ENCODE measurements at regions of chr6 and their contacts with region 1.

Region 1: DNA sequence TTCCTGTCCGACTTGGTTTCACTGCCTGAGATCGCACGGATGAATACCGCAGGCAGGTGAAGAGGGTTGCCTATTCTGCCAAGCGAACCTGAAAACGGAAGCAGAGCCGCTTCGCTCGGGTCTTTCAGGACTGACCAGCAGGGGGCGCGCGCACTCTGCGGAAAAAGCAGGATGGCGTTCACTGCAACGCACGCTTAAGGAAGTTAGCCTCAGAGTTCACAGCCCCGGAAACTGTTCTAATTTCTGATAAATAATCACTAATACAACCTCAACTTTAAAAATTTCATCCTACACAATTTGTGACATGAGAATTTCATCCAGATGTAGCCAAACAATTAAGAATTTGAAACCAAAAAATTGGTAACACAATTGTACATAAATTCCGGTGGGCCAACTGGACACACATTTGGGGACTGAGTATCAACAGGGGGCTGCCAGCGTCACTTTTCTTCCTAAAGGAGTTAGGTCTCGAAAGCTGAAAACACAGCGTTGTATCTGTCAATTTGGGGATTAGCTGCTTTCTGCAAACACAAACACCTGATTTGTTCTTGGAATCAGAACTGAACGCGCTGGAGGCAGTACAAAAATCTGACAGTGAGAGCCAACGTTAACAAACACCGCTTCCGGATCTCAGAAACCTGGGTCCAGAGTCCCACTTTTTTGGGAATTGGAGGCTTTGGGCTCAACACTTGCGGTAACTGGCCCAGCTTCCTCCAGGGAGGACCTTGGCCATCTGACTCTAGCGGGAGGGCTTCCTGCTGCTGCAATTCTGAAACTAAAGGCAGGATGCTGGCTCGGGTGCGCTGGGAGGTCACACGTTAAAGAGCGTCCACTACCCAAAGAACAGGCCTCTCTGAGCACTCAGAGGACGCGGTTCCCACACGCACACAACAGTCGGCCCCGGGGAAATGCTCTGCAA is 8.8 kb downstream of the PXDC1 start:
- DNase-seq: peak; percentile 89 to 98
- H3K4me3 ChIP-seq: no peak overlapping the region
- CTCF ChIP-seq: peak in 1 of 3 donors; percentile 93
- POLR2A ChIP-seq: no peak

Region 2: DNA sequence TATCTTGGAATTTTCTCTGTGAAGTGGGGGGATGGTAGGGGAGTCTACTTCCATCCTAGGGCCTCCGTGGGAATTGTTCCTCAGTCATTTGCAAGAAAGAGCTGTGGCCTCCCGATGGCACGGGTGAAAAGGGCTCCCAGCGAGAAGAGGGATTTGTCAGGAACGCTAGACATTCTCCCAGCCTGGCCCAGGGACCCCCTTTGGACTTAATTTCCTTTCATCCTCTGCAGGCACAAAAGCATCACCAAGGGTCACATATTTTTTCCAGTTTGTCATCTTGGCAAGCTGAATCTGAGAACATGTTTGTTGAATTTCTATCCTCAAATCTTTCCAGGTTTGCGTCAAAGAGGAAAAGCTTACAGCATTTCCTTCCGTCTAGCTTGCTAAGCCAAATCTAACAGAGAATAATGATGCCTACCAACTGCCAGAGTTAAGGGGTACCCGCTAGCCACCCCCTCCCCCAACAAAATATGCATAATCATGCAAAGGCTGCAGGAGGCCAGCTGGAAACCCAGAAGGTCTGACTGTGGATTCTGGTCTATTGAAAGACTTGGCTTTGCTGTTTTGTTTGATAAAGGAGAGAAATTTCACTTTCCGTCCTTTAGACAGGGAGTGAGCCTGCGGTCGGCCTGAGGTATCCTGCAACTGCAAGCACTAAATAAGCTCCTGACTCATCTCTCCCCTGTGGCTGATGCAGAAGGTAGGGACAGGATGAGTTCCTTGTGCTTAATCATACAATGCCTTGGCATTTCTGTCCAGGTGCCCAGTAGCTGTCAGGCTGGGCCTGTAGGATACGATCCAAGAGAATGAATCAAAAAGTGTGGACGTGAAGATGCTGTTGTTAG is 460.8 kb before region 1 on chr6:
- intact Hi-C with region 1: loop called (anchors 5 kb)
- DNase-seq: peak in 1 of 2 donors; percentile 84
- H3K4me3 ChIP-seq: no peak overlapping the region
- CTCF ChIP-seq: no peak
- POLR2A ChIP-seq: no peak

Region 3: DNA sequence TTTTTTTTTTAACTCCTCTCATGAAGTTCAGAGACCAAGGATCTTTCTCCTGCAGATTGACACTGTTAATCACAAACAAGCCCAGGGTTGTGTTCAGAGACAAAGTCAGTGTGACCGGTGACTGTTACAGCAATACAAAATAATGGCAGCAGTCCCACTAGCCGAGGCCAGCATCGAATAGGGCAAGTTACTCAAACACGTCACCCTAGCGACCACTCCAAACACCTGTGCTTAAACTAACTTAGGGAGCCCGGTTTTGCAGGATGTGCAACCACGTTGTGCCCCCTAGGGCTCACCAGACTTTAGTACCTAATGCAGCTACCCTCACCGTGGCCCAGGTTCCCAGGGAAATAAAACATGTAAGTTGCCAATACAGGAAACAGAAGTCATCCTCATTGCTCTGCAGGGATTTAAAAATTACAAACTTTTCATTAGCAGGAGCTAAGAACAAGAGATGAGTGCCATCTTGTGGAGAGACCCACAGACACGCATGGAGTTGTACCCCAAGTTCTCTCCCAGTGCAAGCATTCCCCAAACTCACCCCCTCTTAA is 144.5 kb after region 1 on chr6:
- intact Hi-C with region 1: loop called (anchors 5 kb)
- DNase-seq: peak; percentile 43 to 85
- H3K4me3 ChIP-seq: no peak overlapping the region
- CTCF ChIP-seq: no peak
- POLR2A ChIP-seq: no peak

Region 4: GRCh38 chr6:3939964-3940363 is 197.3 kb after region 1 on chr6:
- intact Hi-C with region 1: loop called (anchors 5 kb)
- DNase-seq: no peak
- H3K4me3 ChIP-seq: no peak overlapping the region
- CTCF ChIP-seq: no peak
- POLR2A ChIP-seq: no peak

Region 5: DNA sequence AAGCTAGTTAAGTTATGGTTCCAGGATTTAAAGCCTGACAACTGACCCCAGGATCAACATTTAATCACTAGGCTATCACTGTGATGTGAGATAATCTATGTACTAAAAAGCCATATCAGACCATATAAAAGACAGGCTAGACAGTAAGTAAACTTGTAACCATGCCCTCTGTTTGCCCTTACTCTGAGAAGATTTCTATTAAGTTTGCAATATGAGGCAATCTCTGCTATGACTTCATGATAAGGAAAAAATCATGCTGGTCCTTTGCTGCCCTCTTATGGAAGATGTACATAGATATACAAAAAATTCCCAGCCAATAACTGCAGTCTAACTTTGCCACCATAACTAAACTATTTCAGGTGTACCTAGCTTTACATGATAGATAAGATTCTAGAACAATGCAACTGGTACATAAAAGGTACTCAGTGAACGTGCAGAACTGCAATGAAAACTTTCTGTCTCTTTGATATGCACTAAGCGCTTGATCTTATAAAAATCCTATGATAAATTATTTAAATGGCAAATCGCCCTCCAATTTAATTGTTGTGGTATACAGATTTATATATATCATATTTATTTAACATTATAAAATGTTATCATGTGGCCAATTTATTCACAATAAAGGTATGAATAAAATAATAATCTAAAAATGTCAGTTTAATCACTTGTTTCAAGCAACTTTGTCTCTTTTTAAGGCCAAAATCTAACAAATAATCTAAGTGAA is 265.8 kb after region 1 on chr6:
- intact Hi-C with region 1: loop called (anchors 10 kb)
- DNase-seq: no peak
- H3K4me3 ChIP-seq: no peak overlapping the region
- CTCF ChIP-seq: no peak
- POLR2A ChIP-seq: no peak

Region 6: GRCh38 chr6:4066029-4066755 is 323.5 kb after region 1 on chr6:
- intact Hi-C with region 1: no loop called
- DNase-seq: no peak
- H3K4me3 ChIP-seq: no peak overlapping the region
- CTCF ChIP-seq: no peak
- POLR2A ChIP-seq: no peak

Measured in lower leg skin (tissue), 4 donors.